GM10248 (cell line): ENCODE measurements at regions of chr1 and their contacts with region 1.

Region 1: GRCh38 chr1:26306290-26307229 is at the start of gene UBXN11:
- DNase-seq: peak; percentile 98
- CTCF ChIP-seq: no peak

Region 2: GRCh38 chr1:26190373-26190987 is 116.1 kb before region 1 on chr1 and contains the start of gene CATSPER4:
- CTCF ChIA-PET with region 1: no interaction called
- POLR2A ChIA-PET with region 1: no interaction called
- DNase-seq: peak; percentile 29
- CTCF ChIP-seq: peak; percentile 18

Region 3: GRCh38 chr1:26284597-26285360 is 21.8 kb before region 1 on chr1:
- CTCF ChIA-PET with region 1: interaction called, 690 read pairs
- POLR2A ChIA-PET with region 1: no interaction called
- DNase-seq: peak; percentile 80
- CTCF ChIP-seq: peak; percentile 89

Region 4: GRCh38 chr1:26336477-26337205 is 30.1 kb after region 1 on chr1:
- CTCF ChIA-PET with region 1: no interaction called
- POLR2A ChIA-PET with region 1: no interaction called
- DNase-seq: peak; percentile 91
- CTCF ChIP-seq: no peak